ENCODE measurements at regions of chrX and their contacts with region 1.

Region 1: GRCh38 chrX:140918407-140919038 is 83.9 kb upstream of the SPANXB1 start:
- H3K4me3 ChIP-seq: no peak overlapping the region
- H3K27ac ChIP-seq: no peak overlapping the region
- H3K4me1 ChIP-seq: no peaks in the 10 kb centered on the region
- CTCF ChIP-seq: peak; percentile 87

Region 2: GRCh38 chrX:140928739-140929138 is 10.2 kb after region 1 on chrX:
- CTCF ChIA-PET with region 1: interaction called, 13 read pairs
- POLR2A ChIA-PET with region 1: no interaction called
- H3K4me3 ChIP-seq: no peak overlapping the region
- H3K27ac ChIP-seq: no peak overlapping the region
- H3K4me1 ChIP-seq: no peaks in the 10 kb centered on the region
- CTCF ChIP-seq: no peak

Region 3: GRCh38 chrX:141278302-141278701 is 359.8 kb after region 1 on chrX:
- CTCF ChIA-PET with region 1: interaction called, 31 read pairs
- POLR2A ChIA-PET with region 1: no interaction called
- H3K4me3 ChIP-seq: no peak overlapping the region
- H3K27ac ChIP-seq: no peak overlapping the region
- H3K4me1 ChIP-seq: no peaks in the 10 kb centered on the region
- CTCF ChIP-seq: no peak